AG04450 (cell line): ENCODE measurements at regions of chr5 and their contacts with region 1.

Region 1: GRCh38 chr5:127875235-127876021 is 172.2 kb downstream of the CCDC192 start:
- DNase-seq: no peak
- H3K4me3 ChIP-seq: no peak overlapping the region
- H3K27ac ChIP-seq: peak overlapping the region; percentile 12
- H3K27me3 ChIP-seq: no peaks in the 10 kb centered on the region
- CTCF ChIP-seq: peak; percentile 33

Region 2: GRCh38 chr5:127858116-127858784 is 17.2 kb before region 1 on chr5:
- CTCF ChIA-PET with region 1: interaction called, 10 read pairs
- POLR2A ChIA-PET with region 1: no interaction called
- DNase-seq: no peak
- H3K4me3 ChIP-seq: no peak overlapping the region
- H3K27ac ChIP-seq: no peak overlapping the region
- H3K27me3 ChIP-seq: no peaks in the 10 kb centered on the region
- CTCF ChIP-seq: no peak

Region 3: GRCh38 chr5:128201065-128201926 is 325.9 kb after region 1 on chr5:
- CTCF ChIA-PET with region 1: interaction called, 58 read pairs
- POLR2A ChIA-PET with region 1: no interaction called
- DNase-seq: no peak
- H3K4me3 ChIP-seq: peak overlapping the region; percentile 33
- H3K27ac ChIP-seq: no peak overlapping the region
- H3K27me3 ChIP-seq: no peaks in the 10 kb centered on the region
- CTCF ChIP-seq: peak; percentile 85

Region 4: GRCh38 chr5:128844354-128844923 is 969.0 kb after region 1 on chr5:
- CTCF ChIA-PET with region 1: no interaction called
- POLR2A ChIA-PET with region 1: no interaction called
- DNase-seq: no peak
- H3K4me3 ChIP-seq: no peak overlapping the region
- H3K27ac ChIP-seq: no peak overlapping the region
- H3K27me3 ChIP-seq: no peaks in the 10 kb centered on the region
- CTCF ChIP-seq: peak; percentile 27